ENCODE measurements at regions of chr3 and their contacts with region 1.

Region 1: GRCh38 chr3:150721285-150722130 is 17.8 kb upstream of the ERICH6 start:
- DNase-seq: no peak
- ATAC-seq: peak; percentile 85
- H3K4me3 Mint-ChIP-seq: no peak overlapping the region
- H3K27ac Mint-ChIP-seq: no peak overlapping the region
- H3K4me1 Mint-ChIP-seq: peaks cover 19% of the 10 kb centered on the region
- H3K27me3 Mint-ChIP-seq: no peaks in the 10 kb centered on the region
- CTCF ChIP-seq: peak; percentile 77

Region 2: GRCh38 chr3:149958171-149958796 is 763.2 kb before region 1 on chr3:
- CTCF ChIA-PET with region 1: no interaction called
- POLR2A ChIA-PET with region 1: no interaction called
- intact Hi-C with region 1: no loop called
- DNase-seq: no peak
- ATAC-seq: no peak
- H3K4me3 Mint-ChIP-seq: no peak overlapping the region
- H3K27ac Mint-ChIP-seq: no peak overlapping the region
- H3K4me1 Mint-ChIP-seq: peaks cover 19% of the 10 kb centered on the region
- H3K27me3 Mint-ChIP-seq: no peaks in the 10 kb centered on the region
- CTCF ChIP-seq: no peak

Region 3: GRCh38 chr3:150396956-150397550 is 324.5 kb before region 1 on chr3:
- CTCF ChIA-PET with region 1: no interaction called
- POLR2A ChIA-PET with region 1: no interaction called
- intact Hi-C with region 1: no loop called
- DNase-seq: no peak
- ATAC-seq: no peak
- H3K4me3 Mint-ChIP-seq: no peak overlapping the region
- H3K27ac Mint-ChIP-seq: no peak overlapping the region
- H3K4me1 Mint-ChIP-seq: no peaks in the 10 kb centered on the region
- H3K27me3 Mint-ChIP-seq: peaks cover 5% of the 10 kb centered on the region
- CTCF ChIP-seq: no peak

Region 4: DNA sequence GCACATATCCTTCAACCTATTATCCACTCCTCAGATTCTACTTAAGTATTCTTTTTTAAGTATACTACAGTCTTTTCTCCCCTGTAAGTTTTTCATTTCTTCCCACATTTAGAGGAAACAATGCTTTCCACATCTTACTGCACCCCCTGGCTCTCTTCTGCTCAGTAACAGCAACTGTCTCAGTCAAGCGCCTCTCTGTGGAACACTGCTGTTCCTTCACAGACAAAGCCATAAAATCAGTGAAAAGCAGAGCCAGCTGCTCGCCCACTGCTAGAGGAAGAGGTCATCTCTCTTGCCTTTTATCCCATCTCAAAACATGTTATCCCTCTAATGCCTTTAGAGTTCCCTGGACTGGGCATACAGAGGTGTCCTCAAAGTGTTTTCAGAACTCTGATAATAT is 200.0 kb before region 1 on chr3:
- CTCF ChIA-PET with region 1: no interaction called
- POLR2A ChIA-PET with region 1: no interaction called
- intact Hi-C with region 1: no loop called
- DNase-seq: no peak
- ATAC-seq: no peak
- H3K4me3 Mint-ChIP-seq: no peak overlapping the region
- H3K27ac Mint-ChIP-seq: no peak overlapping the region
- H3K4me1 Mint-ChIP-seq: no peaks in the 10 kb centered on the region
- H3K27me3 Mint-ChIP-seq: no peaks in the 10 kb centered on the region
- CTCF ChIP-seq: no peak

Region 5: DNA sequence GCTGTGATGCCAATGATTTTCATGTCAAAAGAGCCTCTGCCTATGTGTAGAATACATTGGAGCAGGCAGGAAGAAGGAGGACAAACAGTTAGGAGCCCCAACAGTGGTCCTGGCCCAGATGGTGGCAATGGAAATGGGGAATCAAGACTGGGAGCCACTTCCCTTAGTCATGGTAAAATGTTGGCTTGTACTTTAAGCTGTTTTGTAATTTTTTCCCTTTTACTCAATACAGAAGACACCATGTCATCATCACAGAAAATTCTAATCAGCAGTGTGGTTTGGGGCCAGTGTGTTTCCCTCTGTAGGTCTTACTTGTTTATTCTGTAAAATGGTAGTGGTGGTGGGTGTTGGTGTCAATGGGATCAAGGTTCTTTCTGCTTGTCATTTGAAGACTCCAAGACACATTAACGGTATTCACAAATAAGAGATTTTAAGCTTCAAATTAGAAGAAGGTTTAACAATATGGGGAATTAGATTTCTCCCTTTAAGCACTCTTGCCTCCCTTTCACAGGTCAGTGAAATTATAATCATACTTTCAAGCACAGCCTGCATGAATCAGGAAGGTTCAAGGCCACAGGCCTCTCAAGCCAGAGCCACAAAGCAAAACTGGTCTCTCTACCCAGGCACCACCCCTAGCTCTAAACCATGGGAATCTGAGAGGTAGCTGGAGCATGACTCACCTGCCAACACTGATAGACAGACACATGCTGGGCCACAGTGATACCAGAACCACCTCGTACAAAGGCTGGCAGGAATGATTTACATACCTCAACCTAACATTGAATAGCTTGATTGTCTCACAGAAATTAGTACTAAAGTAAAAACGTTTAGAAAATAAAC is 16.6 kb after region 1 on chr3:
- CTCF ChIA-PET with region 1: interaction called, 9 read pairs
- POLR2A ChIA-PET with region 1: interaction called, 6 read pairs
- intact Hi-C with region 1: loop called (anchors 2 kb)
- DNase-seq: peak; percentile 77
- ATAC-seq: peak; percentile 67
- H3K4me3 Mint-ChIP-seq: peak overlapping the region; percentile 29
- H3K27ac Mint-ChIP-seq: peak overlapping the region; percentile 99
- H3K4me1 Mint-ChIP-seq: peaks cover 74% of the 10 kb centered on the region
- H3K27me3 Mint-ChIP-seq: no peaks in the 10 kb centered on the region
- CTCF ChIP-seq: no peak

Region 6: GRCh38 chr3:150775091-150775501 is 53.6 kb after region 1 on chr3:
- CTCF ChIA-PET with region 1: interaction called, 10 read pairs
- POLR2A ChIA-PET with region 1: no interaction called
- intact Hi-C with region 1: no loop called
- DNase-seq: no peak
- ATAC-seq: no peak
- H3K4me3 Mint-ChIP-seq: no peak overlapping the region
- H3K27ac Mint-ChIP-seq: no peak overlapping the region
- H3K4me1 Mint-ChIP-seq: no peaks in the 10 kb centered on the region
- H3K27me3 Mint-ChIP-seq: peaks cover 1% of the 10 kb centered on the region
- CTCF ChIP-seq: no peak

Region 7: GRCh38 chr3:150830094-150830681 is 108.7 kb after region 1 on chr3:
- CTCF ChIA-PET with region 1: interaction called, 12 read pairs
- POLR2A ChIA-PET with region 1: no interaction called
- intact Hi-C with region 1: no loop called
- DNase-seq: peak; percentile 28
- ATAC-seq: peak; percentile 66
- H3K4me3 Mint-ChIP-seq: no peak overlapping the region
- H3K27ac Mint-ChIP-seq: no peak overlapping the region
- H3K4me1 Mint-ChIP-seq: no peaks in the 10 kb centered on the region
- H3K27me3 Mint-ChIP-seq: no peaks in the 10 kb centered on the region
- CTCF ChIP-seq: peak; percentile 46

Region 8: DNA sequence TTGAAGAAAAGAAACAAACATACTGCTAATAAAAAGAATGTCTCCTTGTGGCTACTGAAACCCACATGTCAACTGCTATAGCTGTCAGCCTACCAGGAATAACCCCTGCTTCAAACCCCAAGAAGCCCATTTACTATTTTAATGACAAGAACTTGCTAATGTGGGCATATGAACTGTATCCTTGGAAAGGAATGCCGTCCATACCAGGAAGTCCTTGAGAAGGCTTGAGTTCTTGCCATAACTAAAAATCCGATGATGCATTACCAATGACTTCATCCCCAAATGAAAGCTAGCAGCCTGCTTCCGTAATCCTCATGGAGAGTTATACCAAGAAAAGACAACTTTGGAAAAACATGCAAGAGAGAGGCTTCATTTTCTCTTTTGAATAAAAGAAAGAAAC is 148.9 kb after region 1 on chr3:
- CTCF ChIA-PET with region 1: interaction called, 30 read pairs
- POLR2A ChIA-PET with region 1: no interaction called
- intact Hi-C with region 1: loop called (anchors 1 kb)
- DNase-seq: no peak
- ATAC-seq: no peak
- H3K4me3 Mint-ChIP-seq: no peak overlapping the region
- H3K27ac Mint-ChIP-seq: no peak overlapping the region
- H3K4me1 Mint-ChIP-seq: peaks cover under 1% of the 10 kb centered on the region
- H3K27me3 Mint-ChIP-seq: peaks cover 7% of the 10 kb centered on the region
- CTCF ChIP-seq: no peak